CD4-positive, alpha-beta memory T cell (primary cell): ENCODE measurements at regions of chr3 and their contacts with region 1.

Region 1: GRCh38 chr3:114290911-114291901 is 2.6 kb upstream of the TIGIT start:
- DNase-seq: peak; percentile 85 to 93 (median 87)
- H3K4me3 ChIP-seq: peak overlapping the region; percentile 38 to 42
- H3K4me3 Mint-ChIP-seq: peak overlapping the region; percentile 79 to 91 (median 86)
- H3K27ac ChIP-seq: peak overlapping the region; percentile 76
- H3K27ac Mint-ChIP-seq: peak overlapping the region; percentile 90 to 97 (median 95)
- H3K4me1 ChIP-seq: peaks cover 49% of the 10 kb centered on the region
- H3K4me1 Mint-ChIP-seq: peaks cover 27 to 56% (median 43%) of the 10 kb centered on the region in 4 donors
- H3K27me3 ChIP-seq: no peaks in the 10 kb centered on the region
- H3K27me3 Mint-ChIP-seq: no peaks in the 10 kb centered on the region

Region 2: GRCh38 chr3:113634782-113635474 is 656.3 kb before region 1 on chr3:
- CTCF ChIA-PET with region 1: no interaction called
- POLR2A ChIA-PET with region 1: no interaction called
- intact Hi-C with region 1: no loop called
- DNase-seq: no peak
- H3K4me3 ChIP-seq: no peak overlapping the region
- H3K4me3 Mint-ChIP-seq: no peak overlapping the region
- H3K27ac ChIP-seq: no peak overlapping the region
- H3K27ac Mint-ChIP-seq: no peak overlapping the region
- H3K4me1 ChIP-seq: no peaks in the 10 kb centered on the region
- H3K4me1 Mint-ChIP-seq: no peaks in the 10 kb centered on the region
- H3K27me3 ChIP-seq: no peaks in the 10 kb centered on the region
- H3K27me3 Mint-ChIP-seq: no peaks in the 10 kb centered on the region

Region 3: GRCh38 chr3:113897373-113897777 is 393.8 kb before region 1 on chr3:
- CTCF ChIA-PET with region 1: no interaction called
- POLR2A ChIA-PET with region 1: no interaction called
- intact Hi-C with region 1: no loop called
- DNase-seq: peak in 2 of 5 donors; percentile 1 to 6
- H3K4me3 ChIP-seq: no peak overlapping the region
- H3K4me3 Mint-ChIP-seq: peak overlapping the region; percentile 4 to 69 (median 46)
- H3K27ac ChIP-seq: no peak overlapping the region
- H3K27ac Mint-ChIP-seq: peak overlapping the region in 3 of 7 donors; percentile 41 to 69 (median 57)
- H3K4me1 ChIP-seq: peaks cover 12% of the 10 kb centered on the region
- H3K4me1 Mint-ChIP-seq: peaks cover 7 to 9% (median 7%) of the 10 kb centered on the region in 4 donors
- H3K27me3 ChIP-seq: no peaks in the 10 kb centered on the region
- H3K27me3 Mint-ChIP-seq: peaks cover 0 to 2% of the 10 kb centered on the region in 2 donors

Region 4: GRCh38 chr3:114152519-114153151 is 138.6 kb before region 1 on chr3:
- CTCF ChIA-PET with region 1: interaction called, 44 read pairs
- POLR2A ChIA-PET with region 1: interaction called, 4 read pairs
- intact Hi-C with region 1: loop called (anchors 1 kb)
- DNase-seq: peak; percentile 76 to 81 (median 78)
- H3K4me3 ChIP-seq: peak overlapping the region in 1 of 2 donors; percentile 34
- H3K4me3 Mint-ChIP-seq: peak overlapping the region; percentile 58 to 76 (median 68)
- H3K27ac ChIP-seq: no peak overlapping the region
- H3K27ac Mint-ChIP-seq: peak overlapping the region in 6 of 7 donors; percentile 4 to 79 (median 46)
- H3K4me1 ChIP-seq: peaks cover 6% of the 10 kb centered on the region
- H3K4me1 Mint-ChIP-seq: peaks cover 0 to 6% (median 5%) of the 10 kb centered on the region in 4 donors
- H3K27me3 ChIP-seq: no peaks in the 10 kb centered on the region
- H3K27me3 Mint-ChIP-seq: no peaks in the 10 kb centered on the region

Region 5: GRCh38 chr3:114231616-114232015 is 59.6 kb before region 1 on chr3:
- CTCF ChIA-PET with region 1: interaction called, 9 read pairs
- POLR2A ChIA-PET with region 1: interaction called, 15 read pairs
- intact Hi-C with region 1: no loop called
- DNase-seq: peak; percentile 46 to 73 (median 61)
- H3K4me3 ChIP-seq: peak overlapping the region in 1 of 2 donors; percentile 27
- H3K4me3 Mint-ChIP-seq: peak overlapping the region; percentile 2 to 85 (median 77)
- H3K27ac ChIP-seq: peak overlapping the region; percentile 45
- H3K27ac Mint-ChIP-seq: peak overlapping the region; percentile 91 to 96 (median 95)
- H3K4me1 ChIP-seq: peaks cover 96% of the 10 kb centered on the region
- H3K4me1 Mint-ChIP-seq: peaks cover 65 to 76% (median 68%) of the 10 kb centered on the region in 4 donors
- H3K27me3 ChIP-seq: no peaks in the 10 kb centered on the region
- H3K27me3 Mint-ChIP-seq: no peaks in the 10 kb centered on the region

Region 6: GRCh38 chr3:114308830-114309229 is 17.6 kb after region 1 on chr3:
- CTCF ChIA-PET with region 1: interaction called, 153 read pairs
- POLR2A ChIA-PET with region 1: interaction called, 168 read pairs
- intact Hi-C with region 1: loop called (anchors 2 kb)
- DNase-seq: peak; percentile 68 to 83 (median 72)
- H3K4me3 ChIP-seq: peak overlapping the region in 1 of 2 donors; percentile 12
- H3K4me3 Mint-ChIP-seq: peak overlapping the region; percentile 37 to 88 (median 68)
- H3K27ac ChIP-seq: peak overlapping the region; percentile 88
- H3K27ac Mint-ChIP-seq: peak overlapping the region; percentile 92 to 98 (median 95)
- H3K4me1 ChIP-seq: peaks cover 72% of the 10 kb centered on the region
- H3K4me1 Mint-ChIP-seq: peaks cover 53 to 66% (median 59%) of the 10 kb centered on the region in 4 donors
- H3K27me3 ChIP-seq: no peaks in the 10 kb centered on the region
- H3K27me3 Mint-ChIP-seq: no peaks in the 10 kb centered on the region

Region 7: DNA sequence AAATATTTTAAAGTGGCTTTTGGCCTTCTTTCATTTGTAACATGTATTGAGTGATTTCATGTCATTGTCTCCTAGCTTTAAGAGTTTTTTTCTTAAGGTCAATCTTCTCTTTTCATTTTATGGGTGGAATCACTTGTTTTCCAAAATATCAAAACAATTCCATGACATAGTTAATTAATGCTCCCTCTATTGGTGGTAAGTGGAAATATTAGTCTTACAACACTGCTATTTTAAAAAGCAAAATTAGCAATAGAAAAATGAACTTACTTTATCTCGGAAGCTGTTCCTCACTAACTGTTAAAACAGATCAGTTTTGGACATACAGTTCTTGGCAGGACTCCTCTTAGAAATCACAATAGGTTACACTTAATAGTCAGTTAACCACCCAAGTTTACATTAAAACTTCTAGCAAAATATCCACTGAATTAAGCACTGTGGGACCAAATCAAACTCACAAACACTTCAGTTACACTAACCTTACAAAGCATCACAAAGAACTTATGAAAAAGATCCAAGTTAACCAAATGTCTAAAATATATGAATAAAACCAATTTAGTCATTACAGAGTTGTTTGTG is 45.0 kb after region 1 on chr3:
- CTCF ChIA-PET with region 1: interaction called, 48 read pairs
- POLR2A ChIA-PET with region 1: interaction called, 13 read pairs
- intact Hi-C with region 1: loop called (anchors 1 kb)
- DNase-seq: no peak
- H3K4me3 ChIP-seq: no peak overlapping the region
- H3K4me3 Mint-ChIP-seq: no peak overlapping the region
- H3K27ac ChIP-seq: no peak overlapping the region
- H3K27ac Mint-ChIP-seq: peak overlapping the region in 5 of 7 donors; percentile 17 to 82 (median 41)
- H3K4me1 ChIP-seq: peaks cover 61% of the 10 kb centered on the region
- H3K4me1 Mint-ChIP-seq: peaks cover 37 to 79% (median 57%) of the 10 kb centered on the region in 4 donors
- H3K27me3 ChIP-seq: no peaks in the 10 kb centered on the region
- H3K27me3 Mint-ChIP-seq: no peaks in the 10 kb centered on the region

Region 8: GRCh38 chr3:114411811-114412803 is 120.9 kb after region 1 on chr3:
- CTCF ChIA-PET with region 1: interaction called, 106 read pairs
- POLR2A ChIA-PET with region 1: no interaction called
- intact Hi-C with region 1: no loop called
- DNase-seq: no peak
- H3K4me3 ChIP-seq: no peak overlapping the region
- H3K4me3 Mint-ChIP-seq: no peak overlapping the region
- H3K27ac ChIP-seq: no peak overlapping the region
- H3K27ac Mint-ChIP-seq: peak overlapping the region in 1 of 7 donors; percentile 28
- H3K4me1 ChIP-seq: no peaks in the 10 kb centered on the region
- H3K4me1 Mint-ChIP-seq: peaks cover 4 to 12% (median 9%) of the 10 kb centered on the region in 4 donors
- H3K27me3 ChIP-seq: no peaks in the 10 kb centered on the region
- H3K27me3 Mint-ChIP-seq: no peaks in the 10 kb centered on the region